ENCODE measurements at regions of chr17 and their contacts with region 1.

Region 1: DNA sequence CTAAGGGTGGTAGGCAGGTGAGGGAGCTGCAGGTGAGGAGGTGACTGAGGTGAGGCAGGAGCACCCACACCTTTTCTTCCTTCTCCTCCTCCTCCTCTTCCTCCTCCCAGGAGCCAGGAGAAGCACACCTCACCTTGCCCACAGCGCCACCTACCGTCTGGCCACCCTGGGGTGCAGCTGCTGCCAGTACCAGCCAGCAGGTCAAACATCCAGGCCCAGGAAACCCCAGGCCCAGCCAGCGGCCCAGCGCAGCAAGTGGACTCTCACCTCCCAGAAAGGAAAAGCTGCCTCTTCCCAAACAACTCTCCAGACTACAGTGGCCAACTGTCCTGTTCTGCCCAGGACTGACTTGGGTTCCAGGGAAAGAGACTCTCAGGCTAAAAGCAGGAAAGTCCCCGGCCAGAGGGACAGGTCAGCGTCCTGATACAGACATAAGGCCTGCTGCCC is 22.7 kb downstream of the PEMT start:
- DNase-seq: no peak
- H3K4me3 ChIP-seq: no peak overlapping the region
- H3K27me3 ChIP-seq: no peaks in the 10 kb centered on the region
- CTCF ChIP-seq: peak; percentile 84

Region 2: GRCh38 chr17:17455173-17455572 is 113.6 kb before region 1 on chr17:
- CTCF ChIA-PET with region 1: no interaction called
- POLR2A ChIA-PET with region 1: no interaction called
- DNase-seq: no peak
- H3K4me3 ChIP-seq: no peak overlapping the region
- H3K27me3 ChIP-seq: peaks cover 3% of the 10 kb centered on the region; the same call in 1 of the 2 replicates
- CTCF ChIP-seq: no peak

Region 3: GRCh38 chr17:17506811-17507464 is 61.8 kb before region 1 on chr17:
- CTCF ChIA-PET with region 1: interaction called, 23 read pairs
- POLR2A ChIA-PET with region 1: no interaction called
- DNase-seq: no peak
- H3K4me3 ChIP-seq: no peak overlapping the region
- H3K27me3 ChIP-seq: no peaks in the 10 kb centered on the region
- CTCF ChIP-seq: no peak

Region 4: DNA sequence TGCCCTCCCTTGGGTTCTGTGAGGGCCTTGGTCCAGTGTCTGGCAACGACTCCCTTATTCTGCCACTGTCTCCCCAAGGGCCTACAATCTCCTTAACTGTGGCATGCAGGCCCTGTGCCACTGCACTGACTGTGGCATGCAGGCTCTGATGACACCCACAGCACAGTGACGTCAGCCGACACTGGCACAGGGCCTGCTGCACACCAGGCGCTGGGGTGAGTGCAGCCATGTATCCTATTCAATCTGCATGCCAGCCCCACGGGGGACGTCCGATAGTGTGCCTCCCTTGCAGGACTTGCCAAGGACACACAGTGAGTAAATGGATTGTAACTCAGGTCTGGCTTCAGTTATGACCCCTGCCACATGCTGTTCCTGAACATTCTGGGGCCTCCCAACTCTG is 32.8 kb before region 1 on chr17:
- CTCF ChIA-PET with region 1: interaction called, 13 read pairs
- POLR2A ChIA-PET with region 1: no interaction called
- DNase-seq: no peak
- H3K4me3 ChIP-seq: no peak overlapping the region
- H3K27me3 ChIP-seq: no peaks in the 10 kb centered on the region
- CTCF ChIP-seq: no peak

Region 5: GRCh38 chr17:17580662-17581470 is 12.1 kb after region 1 on chr17:
- CTCF ChIA-PET with region 1: interaction called, 29 read pairs
- POLR2A ChIA-PET with region 1: no interaction called
- DNase-seq: no peak
- H3K4me3 ChIP-seq: no peak overlapping the region
- H3K27me3 ChIP-seq: no peaks in the 10 kb centered on the region
- CTCF ChIP-seq: no peak

Region 6: DNA sequence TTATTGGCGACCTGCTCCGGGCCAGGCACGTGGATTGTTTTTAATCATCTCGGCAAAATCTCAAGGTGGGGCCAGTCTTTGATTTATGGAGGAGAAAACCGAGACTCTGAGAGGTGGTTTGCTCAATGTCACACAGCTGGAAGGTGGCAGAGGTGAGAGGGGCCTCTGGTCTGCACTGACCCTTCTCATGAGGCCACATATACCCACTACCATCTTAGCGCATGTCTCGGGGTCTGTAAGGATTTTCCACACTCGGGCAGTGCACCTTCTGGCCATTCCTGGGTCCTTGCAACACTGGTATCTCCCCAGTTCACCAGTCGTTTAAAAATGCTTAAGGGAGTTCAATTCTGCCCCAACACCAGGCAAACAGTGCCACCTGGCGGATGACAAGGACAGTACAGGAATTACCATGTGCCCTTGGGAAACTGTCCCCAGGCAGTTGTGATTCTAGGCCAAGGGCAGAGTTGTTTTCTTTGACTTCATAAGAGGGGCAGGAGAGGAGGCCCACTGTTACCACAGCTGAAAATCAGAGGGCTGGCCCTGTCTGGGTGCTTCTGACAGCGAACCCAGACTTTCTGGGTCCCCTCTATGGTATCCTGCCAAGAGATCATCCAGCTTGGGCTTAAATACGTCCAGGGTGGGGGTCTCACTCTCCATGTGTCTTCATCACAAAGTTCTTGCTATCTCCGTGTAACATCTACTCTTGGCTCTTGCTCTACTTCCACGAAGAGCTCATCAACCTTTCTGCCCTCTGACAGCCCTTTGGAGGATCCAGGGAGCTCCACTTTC is 73.0 kb after region 1 on chr17:
- CTCF ChIA-PET with region 1: interaction called, 17 read pairs
- POLR2A ChIA-PET with region 1: no interaction called
- DNase-seq: peak; percentile 21
- H3K4me3 ChIP-seq: no peak overlapping the region
- H3K27me3 ChIP-seq: peaks cover 3% of the 10 kb centered on the region; the same call in 1 of the 2 replicates
- CTCF ChIP-seq: peak; percentile 86

Measured in BJ (cell line).